PC-3 (cell line): ENCODE measurements at regions of chr19 and their contacts with region 1.

Region 1: GRCh38 chr19:55487632-55488152 is 544 bp upstream of the SSC5D start:
- DNase-seq: peak; percentile 81
- ATAC-seq: peak; percentile 69
- H3K4me3 ChIP-seq: peak overlapping the region; percentile 9; the same call in 1 of the 2 replicates
- H3K27ac ChIP-seq: peak overlapping the region; percentile 73
- H3K4me1 ChIP-seq: peaks cover 33% of the 10 kb centered on the region
- H3K27me3 ChIP-seq: no peaks in the 10 kb centered on the region
- CTCF ChIP-seq: no peak

Region 2: DNA sequence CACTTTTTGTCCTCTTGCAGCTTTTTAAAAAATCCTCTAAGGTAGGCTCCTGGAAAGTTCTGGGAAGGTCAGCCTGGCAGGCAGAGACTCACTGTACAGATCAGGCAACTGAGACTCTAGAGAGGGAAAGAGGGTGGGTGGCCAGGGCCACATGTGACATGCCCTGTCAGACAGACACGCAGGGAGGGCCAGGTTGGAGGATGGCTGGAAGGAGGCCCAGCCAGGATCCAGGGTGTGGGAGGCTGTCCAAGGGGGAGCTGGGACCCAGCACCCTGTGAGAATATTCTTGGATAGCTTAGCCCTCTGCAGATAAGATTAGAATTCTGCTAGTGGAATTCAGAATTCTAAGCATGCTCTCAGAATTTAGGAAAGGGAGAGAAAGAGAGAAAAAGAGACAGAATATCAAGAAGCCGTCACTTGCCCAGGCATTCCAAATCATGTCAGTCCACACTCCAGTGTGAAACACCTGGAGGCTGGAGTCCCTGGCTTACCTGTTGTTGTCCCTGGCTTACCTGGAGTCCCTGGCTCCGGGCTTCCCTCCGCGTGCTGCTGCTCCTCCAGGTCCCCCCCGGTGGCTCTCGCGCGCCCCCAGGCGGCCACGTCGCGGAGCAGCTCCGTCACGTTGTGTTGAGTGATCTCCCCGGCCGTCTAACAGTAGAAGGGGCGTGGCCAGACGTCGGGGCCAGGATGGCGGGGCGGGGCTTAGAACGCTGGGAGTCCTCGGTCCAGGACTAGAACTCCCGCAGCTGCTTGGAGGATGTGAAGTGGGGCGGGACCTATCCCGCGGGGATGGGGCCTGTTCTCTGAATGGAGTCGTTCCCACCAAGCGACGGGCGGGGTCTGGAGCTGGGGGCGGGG is 327.3 kb before region 1 on chr19:
- CTCF ChIA-PET with region 1: no interaction called
- POLR2A ChIA-PET with region 1: interaction called, 23 read pairs
- intact Hi-C with region 1: no loop called
- DNase-seq: peak; percentile 99
- ATAC-seq: peak; percentile 81
- H3K4me3 ChIP-seq: no peak overlapping the region
- H3K27ac ChIP-seq: no peak overlapping the region
- H3K4me1 ChIP-seq: peaks cover 21% of the 10 kb centered on the region
- H3K27me3 ChIP-seq: no peaks in the 10 kb centered on the region
- CTCF ChIP-seq: peak; percentile 99

Region 3: GRCh38 chr19:56132316-56132822 is 644.7 kb after region 1 on chr19:
- CTCF ChIA-PET with region 1: no interaction called
- POLR2A ChIA-PET with region 1: no interaction called
- intact Hi-C with region 1: no loop called
- DNase-seq: no peak
- ATAC-seq: no peak
- H3K4me3 ChIP-seq: no peak overlapping the region
- H3K27ac ChIP-seq: no peak overlapping the region
- H3K4me1 ChIP-seq: peaks cover 3% of the 10 kb centered on the region; the same call in 1 of the 2 replicates
- H3K27me3 ChIP-seq: no peaks in the 10 kb centered on the region
- CTCF ChIP-seq: no peak